ENCODE measurements at regions of chr17 and their contacts with region 1.

Region 1: DNA sequence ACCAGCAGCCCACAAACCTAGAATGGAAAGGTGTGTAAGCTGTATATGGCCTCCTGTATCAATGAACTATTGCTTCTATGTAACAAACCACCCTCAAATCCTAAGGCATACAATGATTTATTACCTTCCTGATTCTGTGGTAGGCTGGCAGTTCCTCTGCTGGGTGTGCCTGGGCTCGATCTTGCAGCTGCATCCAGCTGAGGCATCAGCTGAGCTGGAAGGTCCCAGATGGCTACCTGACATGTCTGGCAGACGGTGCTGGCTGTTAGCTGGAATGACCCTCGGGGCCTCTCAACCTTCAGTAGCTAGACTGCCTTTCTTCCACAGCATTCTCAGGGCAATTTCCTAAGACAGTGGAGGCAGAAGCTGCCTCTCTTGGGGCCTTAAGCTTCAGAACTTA is 152.7 kb downstream of the RAB11FIP4 start:
- DNase-seq: no peak
- H3K4me3 ChIP-seq: no peak overlapping the region
- H3K27ac ChIP-seq: no peak overlapping the region
- H3K4me1 ChIP-seq: 0 out of 2 replicates have a peak, but pooled peaks cover 4% of the 10 kb centered on the region
- H3K27me3 ChIP-seq: no peaks in the 10 kb centered on the region
- CTCF ChIP-seq: no peak

Region 2: DNA sequence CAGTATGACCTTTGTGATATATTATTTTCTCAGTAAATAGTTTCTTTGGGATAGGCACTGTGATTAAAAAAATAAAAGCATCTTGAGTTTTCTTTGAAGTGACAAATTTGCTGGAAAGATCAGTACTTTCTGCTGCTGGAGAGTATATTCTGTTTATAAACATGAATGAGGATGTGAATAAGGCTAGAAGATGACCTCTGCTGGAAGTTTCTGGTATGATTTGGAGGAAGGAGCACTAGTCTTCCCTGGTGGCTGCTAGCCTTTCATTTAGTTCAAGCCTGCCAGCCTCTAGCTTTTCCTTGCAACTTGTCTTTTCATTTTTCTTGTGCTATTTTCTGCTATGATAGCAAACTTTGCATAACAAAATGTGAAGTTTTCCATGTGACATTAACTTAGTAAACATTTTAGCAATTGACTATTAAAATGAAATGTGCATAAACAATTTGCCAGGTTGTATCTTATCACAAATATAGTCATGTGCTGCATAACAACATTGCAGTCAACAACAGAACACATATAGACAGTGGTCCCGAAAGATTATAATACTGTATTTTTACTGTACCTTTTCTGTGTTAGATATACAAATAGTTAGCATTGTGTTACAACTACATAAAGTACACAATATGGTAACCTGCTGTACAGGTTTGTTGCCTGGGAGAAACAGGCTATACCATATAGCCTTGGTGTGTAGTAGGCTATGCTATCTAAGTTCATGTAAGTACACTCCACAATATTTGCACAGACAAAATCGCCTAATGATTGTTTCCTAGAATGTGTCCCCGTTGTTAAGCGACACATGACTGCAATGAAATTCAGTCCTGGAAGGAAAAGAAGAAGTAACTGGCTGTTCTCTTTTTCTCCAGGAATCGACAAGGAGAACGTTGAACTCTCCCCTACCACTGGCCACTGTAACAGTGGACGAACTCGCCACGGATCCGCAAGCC is 170.8 kb before region 1 on chr17:
- CTCF ChIA-PET with region 1: no interaction called
- POLR2A ChIA-PET with region 1: no interaction called
- intact Hi-C with region 1: no loop called
- DNase-seq: no peak
- H3K4me3 ChIP-seq: no peak overlapping the region
- H3K27ac ChIP-seq: no peak overlapping the region
- H3K4me1 ChIP-seq: no peaks in the 10 kb centered on the region
- H3K27me3 ChIP-seq: no peaks in the 10 kb centered on the region
- CTCF ChIP-seq: peak; percentile 75

Region 3: GRCh38 chr17:31688704-31689103 is 144.5 kb after region 1 on chr17:
- CTCF ChIA-PET with region 1: interaction called, 15 read pairs
- POLR2A ChIA-PET with region 1: no interaction called
- intact Hi-C with region 1: no loop called
- DNase-seq: peak; percentile 23 to 61
- H3K4me3 ChIP-seq: no peak overlapping the region
- H3K27ac ChIP-seq: no peak overlapping the region
- H3K4me1 ChIP-seq: peaks cover 17% of the 10 kb centered on the region
- H3K27me3 ChIP-seq: no peaks in the 10 kb centered on the region
- CTCF ChIP-seq: no peak

Region 4: DNA sequence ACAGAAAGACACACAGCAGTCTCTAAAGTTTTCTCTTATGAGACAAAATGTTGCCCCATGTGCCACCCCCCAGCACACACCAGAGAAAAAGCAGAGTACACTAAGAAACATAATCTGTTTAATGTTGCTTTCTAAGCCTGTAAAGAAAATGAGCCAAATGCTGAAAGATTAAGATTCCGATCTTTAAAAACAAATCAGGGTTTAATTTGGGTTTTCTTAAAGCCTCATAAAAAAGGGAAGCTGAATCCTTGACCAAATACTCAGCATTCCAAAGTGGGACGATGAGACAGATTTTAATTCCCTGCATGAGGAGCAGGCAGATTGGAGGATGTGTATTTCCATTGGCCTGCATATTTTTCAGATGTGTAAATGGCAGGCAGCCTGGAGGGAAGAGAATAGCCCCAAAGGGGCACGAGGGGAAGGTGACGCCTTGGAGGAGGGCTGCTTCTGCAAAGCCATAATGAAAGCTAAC is 196.5 kb after region 1 on chr17:
- CTCF ChIA-PET with region 1: no interaction called
- POLR2A ChIA-PET with region 1: no interaction called
- intact Hi-C with region 1: no loop called
- DNase-seq: no peak
- H3K4me3 ChIP-seq: no peak overlapping the region
- H3K27ac ChIP-seq: no peak overlapping the region
- H3K4me1 ChIP-seq: no peaks in the 10 kb centered on the region
- H3K27me3 ChIP-seq: no peaks in the 10 kb centered on the region
- CTCF ChIP-seq: no peak